A549 (cell line): ENCODE measurements at regions of chr12 and their contacts with region 1.

Region 1: GRCh38 chr12:103548622-103549601 is 38.2 kb upstream of the STAB2 start:
- DNase-seq: peak; percentile 64 to 81
- ATAC-seq: peak; percentile 93 to 99
- H3K4me3 ChIP-seq: no peak overlapping the region
- H3K27ac ChIP-seq: peak overlapping the region in 1 of 2 experiments; percentile 28; a peak in 1 of 6 replicates
- H3K4me1 ChIP-seq: peaks cover 8% of the 10 kb centered on the region; the same call in 1 of the 3 replicates
- CTCF ChIP-seq: peak; percentile 98
- EP300 ChIP-seq: no peak
- POLR2A ChIP-seq: no peak
- RAD21 ChIP-seq: peak; percentile 98 to 100

Region 2: GRCh38 chr12:102888511-102888910 is 660.4 kb before region 1 on chr12:
- CTCF ChIA-PET with region 1: interaction called, 89 read pairs
- POLR2A ChIA-PET with region 1: no interaction called
- DNase-seq: no peak
- ATAC-seq: no peak
- H3K4me3 ChIP-seq: no peak overlapping the region
- H3K27ac ChIP-seq: no peak overlapping the region
- H3K4me1 ChIP-seq: no peaks in the 10 kb centered on the region
- CTCF ChIP-seq: no peak
- EP300 ChIP-seq: no peak
- POLR2A ChIP-seq: no peak
- RAD21 ChIP-seq: no peak

Region 3: GRCh38 chr12:102958073-102958829 is 590.7 kb before region 1 on chr12:
- CTCF ChIA-PET with region 1: interaction called, 11 read pairs
- POLR2A ChIA-PET with region 1: no interaction called
- DNase-seq: peak; percentile 21 to 64
- ATAC-seq: peak; percentile 64 to 80; a peak in 5 of 6 replicates
- H3K4me3 ChIP-seq: peak overlapping the region; percentile 53
- H3K27ac ChIP-seq: no peak overlapping the region
- H3K4me1 ChIP-seq: no peaks in the 10 kb centered on the region
- CTCF ChIP-seq: no peak
- EP300 ChIP-seq: no peak
- POLR2A ChIP-seq: no peak
- RAD21 ChIP-seq: no peak

Region 4: DNA sequence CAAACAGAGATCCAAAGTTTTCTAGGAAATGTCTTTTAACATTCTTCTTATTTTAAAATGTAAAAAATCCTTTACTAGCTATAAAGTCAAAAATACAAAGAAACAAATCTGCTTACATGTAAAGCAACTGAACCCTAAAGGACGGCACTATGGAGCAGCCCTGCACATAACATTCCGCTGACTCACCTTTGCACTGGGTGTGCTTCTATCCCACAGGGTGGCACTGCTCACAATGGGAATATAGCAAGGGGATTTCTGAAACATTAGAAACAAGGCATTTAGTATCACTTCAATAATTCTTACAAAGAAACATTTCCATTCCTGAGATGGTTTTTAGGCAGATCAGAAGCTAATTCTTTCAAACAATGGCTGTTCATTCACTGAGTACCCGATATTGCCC is 147.5 kb before region 1 on chr12:
- CTCF ChIA-PET with region 1: interaction called, 12 read pairs
- POLR2A ChIA-PET with region 1: no interaction called
- DNase-seq: peak in 1 of 2 experiments; percentile 62
- ATAC-seq: peak; percentile 86 to 95; a peak in 5 of 6 replicates
- H3K4me3 ChIP-seq: no peak overlapping the region
- H3K27ac ChIP-seq: no peak overlapping the region
- H3K4me1 ChIP-seq: no peaks in the 10 kb centered on the region
- CTCF ChIP-seq: no peak; the same call in 2 of the 3 replicates
- EP300 ChIP-seq: no peak
- POLR2A ChIP-seq: no peak
- RAD21 ChIP-seq: peak; percentile 21 to 37; a peak in 1 of 5 replicates

Region 5: DNA sequence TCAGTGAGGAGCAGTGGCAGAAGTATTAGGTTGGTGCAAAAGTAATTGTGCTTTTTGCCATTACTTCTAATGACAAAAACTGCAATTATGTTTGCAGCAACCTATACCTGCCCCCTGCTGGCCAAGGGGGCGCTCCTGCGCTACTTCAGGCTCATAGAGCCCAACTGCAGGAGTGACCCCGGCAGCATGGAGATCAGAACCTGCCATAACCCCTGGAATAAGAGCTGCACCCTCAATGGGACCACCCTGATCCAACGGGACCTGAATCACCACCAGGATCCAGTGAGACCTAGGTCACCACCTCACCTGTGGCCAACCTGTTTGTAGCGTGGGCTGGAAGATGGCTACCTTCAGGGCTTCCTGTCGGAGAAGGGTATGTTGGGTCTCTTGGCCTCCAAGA is 44.9 kb before region 1 on chr12:
- CTCF ChIA-PET with region 1: interaction called, 134 read pairs
- POLR2A ChIA-PET with region 1: no interaction called
- DNase-seq: peak in 1 of 2 experiments; percentile 34
- ATAC-seq: peak in 1 of 2 experiments; percentile 81; a peak in 3 of 6 replicates
- H3K4me3 ChIP-seq: no peak overlapping the region
- H3K27ac ChIP-seq: no peak overlapping the region
- H3K4me1 ChIP-seq: peaks cover 11% of the 10 kb centered on the region; the same call in 2 of the 3 replicates
- CTCF ChIP-seq: peak; percentile 19; the same call in 1 of the 3 replicates
- EP300 ChIP-seq: no peak
- POLR2A ChIP-seq: no peak
- RAD21 ChIP-seq: peak in 1 of 2 experiments; percentile 36; a peak in 1 of 5 replicates

Region 6: GRCh38 chr12:103538397-103538796 is 10.5 kb before region 1 on chr12:
- CTCF ChIA-PET with region 1: interaction called, 45 read pairs
- POLR2A ChIA-PET with region 1: no interaction called
- DNase-seq: no peak
- ATAC-seq: no peak; a peak in 1 of 6 replicates
- H3K4me3 ChIP-seq: no peak overlapping the region
- H3K27ac ChIP-seq: peak overlapping the region in 1 of 2 experiments; percentile 0; a peak in 1 of 6 replicates
- H3K4me1 ChIP-seq: peaks cover 5% of the 10 kb centered on the region; the same call in 1 of the 3 replicates
- CTCF ChIP-seq: no peak
- EP300 ChIP-seq: no peak
- POLR2A ChIP-seq: no peak
- RAD21 ChIP-seq: no peak